MCF 10A (cell line): ENCODE measurements at regions of chr9 and their contacts with region 1.

Region 1: GRCh38 chr9:134099123-134099787 is 31.4 kb upstream of the BRD3 start:
- DNase-seq: peak; percentile 68
- H3K4me3 Mint-ChIP-seq: no peak overlapping the region
- H3K27ac Mint-ChIP-seq: no peak overlapping the region
- H3K4me1 Mint-ChIP-seq: peaks cover 5% of the 10 kb centered on the region
- H3K27me3 Mint-ChIP-seq: peaks cover 34% of the 10 kb centered on the region
- CTCF ChIP-seq: peak; percentile 83

Region 2: DNA sequence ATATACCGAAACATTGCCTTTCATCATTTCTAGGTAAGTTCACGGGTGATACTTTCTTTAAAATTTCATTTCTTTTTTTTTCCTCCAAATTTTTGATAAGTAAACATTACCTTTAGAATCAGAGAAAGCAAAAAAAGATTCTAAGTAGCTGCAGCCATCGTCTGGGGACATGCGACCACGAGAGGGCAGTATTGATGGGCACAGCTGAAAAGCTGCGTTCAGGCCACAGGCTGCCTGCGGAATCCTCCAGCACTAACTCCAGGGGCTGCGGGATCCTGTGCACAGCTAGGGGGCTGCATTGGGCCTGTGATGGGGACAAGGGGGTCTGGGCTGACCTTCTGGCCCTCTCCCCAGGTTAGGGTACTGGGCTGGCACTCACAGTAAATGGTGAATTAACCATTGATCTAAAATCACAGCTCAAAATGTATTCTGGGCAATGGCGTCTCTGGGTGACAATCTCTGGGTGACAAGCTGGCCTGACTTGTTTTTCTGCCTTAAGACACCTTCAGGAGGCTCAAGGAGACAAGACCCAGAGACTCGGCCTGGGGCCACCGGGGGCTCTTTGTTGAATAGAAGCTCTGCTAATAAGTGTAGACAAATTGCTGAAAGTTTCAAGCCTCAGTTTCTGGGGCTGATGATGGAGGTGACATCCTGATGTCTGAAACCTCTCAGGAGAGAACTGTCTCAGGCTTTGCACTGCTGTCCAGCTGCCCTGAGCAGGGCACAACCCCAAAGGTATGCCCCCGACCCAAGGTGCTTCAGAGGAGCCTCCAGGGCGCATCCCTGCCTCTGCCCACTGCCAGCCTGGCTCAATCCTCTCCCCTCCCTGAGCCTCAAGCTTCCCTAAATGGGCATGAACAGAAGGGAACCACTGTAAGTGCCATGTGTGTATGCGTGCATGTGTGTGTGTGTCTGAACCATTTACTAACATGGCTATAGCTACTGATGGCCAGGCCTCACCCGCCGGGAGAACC is 316.8 kb before region 1 on chr9:
- CTCF ChIA-PET with region 1: interaction called, 3 read pairs
- POLR2A ChIA-PET with region 1: no interaction called
- intact Hi-C with region 1: loop called (anchors 5 kb)
- DNase-seq: peak; percentile 55
- H3K4me3 Mint-ChIP-seq: no peak overlapping the region
- H3K27ac Mint-ChIP-seq: no peak overlapping the region
- H3K4me1 Mint-ChIP-seq: no peaks in the 10 kb centered on the region
- H3K27me3 Mint-ChIP-seq: no peaks in the 10 kb centered on the region
- CTCF ChIP-seq: peak; percentile 64

Region 3: DNA sequence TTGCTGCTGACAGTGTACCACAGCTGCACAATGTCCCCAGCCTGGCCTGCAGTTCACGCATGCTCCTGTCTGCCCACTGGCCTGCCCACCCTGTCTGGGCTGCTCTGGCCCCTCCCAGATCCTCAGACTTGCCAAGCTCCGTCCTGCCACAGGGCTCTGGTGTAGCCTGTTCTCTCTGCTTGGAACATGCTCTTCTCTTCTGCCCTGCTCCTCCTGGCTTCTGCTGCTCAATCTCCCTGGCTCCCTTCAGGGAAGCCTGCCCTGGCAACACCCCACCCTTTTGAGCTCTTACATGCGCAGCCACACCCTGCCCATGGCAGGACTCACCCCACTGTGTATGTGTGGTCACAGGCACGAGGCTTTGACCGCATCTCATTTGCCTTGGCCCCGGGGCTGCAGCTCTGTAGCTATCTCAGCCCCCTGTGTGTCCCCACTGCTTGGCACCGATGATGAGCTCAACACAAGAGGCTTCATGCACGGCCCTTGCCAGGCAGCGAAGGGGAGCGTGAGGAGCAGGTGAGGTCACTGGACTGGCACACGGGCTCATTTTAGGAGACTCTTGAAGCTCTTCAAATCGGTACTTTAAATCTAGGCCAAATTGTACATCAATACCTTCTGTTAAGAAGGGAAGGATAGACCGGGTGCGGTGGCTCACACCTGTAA is 11.1 kb before region 1 on chr9:
- CTCF ChIA-PET with region 1: interaction called, 16 read pairs
- POLR2A ChIA-PET with region 1: no interaction called
- intact Hi-C with region 1: no loop called
- DNase-seq: peak; percentile 31
- H3K4me3 Mint-ChIP-seq: no peak overlapping the region
- H3K27ac Mint-ChIP-seq: no peak overlapping the region
- H3K4me1 Mint-ChIP-seq: peaks cover 8% of the 10 kb centered on the region
- H3K27me3 Mint-ChIP-seq: peaks cover 21% of the 10 kb centered on the region
- CTCF ChIP-seq: no peak